Endothelial cell of umbilical vein (primary cell): ENCODE measurements at regions of chr1 and their contacts with region 1.

Region 1: GRCh38 chr1:20361806-20362640 is 71.3 kb downstream of the VWA5B1 start:
- DNase-seq: peak; percentile 45
- H3K4me3 ChIP-seq: no peak overlapping the region
- H3K27ac ChIP-seq: no peak overlapping the region
- H3K4me1 ChIP-seq: no peaks in the 10 kb centered on the region
- H3K27me3 ChIP-seq: peaks cover 20 to 21% of the 10 kb centered on the region in 2 experiments
- CTCF ChIP-seq: peak; percentile 76 to 81
- POLR2A ChIP-seq: no peak

Region 2: GRCh38 chr1:20212685-20213331 is 149.2 kb before region 1 on chr1:
- CTCF ChIA-PET with region 1: interaction called, 12 read pairs
- POLR2A ChIA-PET with region 1: no interaction called
- dilution Hi-C with region 1: no loop called
- intact Hi-C with region 1: loop called (anchors 5 kb)
- DNase-seq: peak; percentile 39
- H3K4me3 ChIP-seq: no peak overlapping the region
- H3K27ac ChIP-seq: no peak overlapping the region
- H3K4me1 ChIP-seq: no peaks in the 10 kb centered on the region
- H3K27me3 ChIP-seq: peaks cover 7% of the 10 kb centered on the region in 2 experiments
- CTCF ChIP-seq: peak; percentile 76 to 79
- POLR2A ChIP-seq: no peak

Region 3: GRCh38 chr1:20376880-20377494 is 15.0 kb after region 1 on chr1:
- CTCF ChIA-PET with region 1: interaction called, 11 read pairs
- POLR2A ChIA-PET with region 1: no interaction called
- dilution Hi-C with region 1: no loop called
- intact Hi-C with region 1: no loop called
- DNase-seq: peak; percentile 58
- H3K4me3 ChIP-seq: no peak overlapping the region
- H3K27ac ChIP-seq: no peak overlapping the region
- H3K4me1 ChIP-seq: no peaks in the 10 kb centered on the region
- H3K27me3 ChIP-seq: no peaks in the 10 kb centered on the region
- CTCF ChIP-seq: peak; percentile 73 to 91
- POLR2A ChIP-seq: no peak

Region 4: DNA sequence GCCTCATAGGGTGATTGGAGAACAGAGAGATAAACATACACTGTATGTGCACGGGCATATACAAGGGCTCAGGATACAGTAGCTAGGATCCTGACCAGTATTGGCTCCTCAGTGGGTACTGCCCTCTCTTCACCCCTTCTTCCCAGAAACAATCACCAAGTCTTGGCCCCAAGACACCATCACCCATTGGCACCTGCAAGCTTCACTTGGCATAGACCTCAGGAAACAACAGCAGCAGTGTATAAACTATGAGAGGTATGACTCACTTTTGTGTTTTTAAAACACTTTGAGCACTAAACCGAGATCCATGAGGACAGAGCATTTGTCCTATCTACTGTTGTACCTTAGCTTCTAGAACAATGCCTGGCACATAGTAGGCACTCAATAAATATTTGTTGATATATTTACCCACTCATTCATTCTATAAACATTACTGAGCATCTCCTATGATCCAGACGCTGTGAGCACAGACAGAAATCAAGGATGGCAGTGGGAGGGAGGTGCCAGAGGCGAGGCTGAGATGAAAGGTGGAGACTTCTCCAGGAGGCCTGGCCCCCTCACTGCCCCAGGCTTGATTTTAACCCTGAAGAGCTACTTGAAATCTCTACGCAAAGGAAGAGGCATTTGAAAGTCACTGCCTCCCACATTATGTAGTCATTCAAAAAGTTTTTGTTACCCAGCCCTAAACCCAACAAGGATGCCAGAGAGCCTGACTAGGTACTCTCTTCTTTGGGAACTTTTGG is 28.7 kb after region 1 on chr1:
- CTCF ChIA-PET with region 1: no interaction called
- POLR2A ChIA-PET with region 1: no interaction called
- dilution Hi-C with region 1: no loop called
- intact Hi-C with region 1: no loop called
- DNase-seq: peak; percentile 58
- H3K4me3 ChIP-seq: no peak overlapping the region
- H3K27ac ChIP-seq: no peak overlapping the region
- H3K4me1 ChIP-seq: no peaks in the 10 kb centered on the region
- H3K27me3 ChIP-seq: peaks cover 0 to 3% of the 10 kb centered on the region in 2 experiments
- CTCF ChIP-seq: no peak
- POLR2A ChIP-seq: no peak

Region 5: GRCh38 chr1:20430355-20431175 is 68.5 kb after region 1 on chr1:
- CTCF ChIA-PET with region 1: interaction called, 10 read pairs
- POLR2A ChIA-PET with region 1: no interaction called
- dilution Hi-C with region 1: no loop called
- intact Hi-C with region 1: loop called (anchors 1 kb)
- DNase-seq: peak; percentile 34
- H3K4me3 ChIP-seq: no peak overlapping the region
- H3K27ac ChIP-seq: no peak overlapping the region
- H3K4me1 ChIP-seq: peaks cover 8% of the 10 kb centered on the region
- H3K27me3 ChIP-seq: no peaks in the 10 kb centered on the region
- CTCF ChIP-seq: peak; percentile 64 to 79
- POLR2A ChIP-seq: no peak

Region 6: GRCh38 chr1:20485527-20486456 is 123.8 kb after region 1 on chr1 and contains the start of gene CAMK2N1:
- CTCF ChIA-PET with region 1: interaction called, 81 read pairs
- POLR2A ChIA-PET with region 1: no interaction called
- dilution Hi-C with region 1: no loop called
- intact Hi-C with region 1: no loop called
- DNase-seq: peak; percentile 44
- H3K4me3 ChIP-seq: peak within 1 kb of the TSS; percentile 54 to 78 (median 56)
- H3K27ac ChIP-seq: peak within 1 kb of the TSS; percentile 13
- H3K4me1 ChIP-seq: peaks cover 12% of the 10 kb centered on the region
- H3K27me3 ChIP-seq: peaks cover 0 to 3% of the 10 kb centered on the region in 2 experiments
- CTCF ChIP-seq: no peak
- POLR2A ChIP-seq: peak; percentile 54
- total RNA-seq, gene CAMK2N1: 11.9 and 18.3 TPM in 2 replicates

Region 7: DNA sequence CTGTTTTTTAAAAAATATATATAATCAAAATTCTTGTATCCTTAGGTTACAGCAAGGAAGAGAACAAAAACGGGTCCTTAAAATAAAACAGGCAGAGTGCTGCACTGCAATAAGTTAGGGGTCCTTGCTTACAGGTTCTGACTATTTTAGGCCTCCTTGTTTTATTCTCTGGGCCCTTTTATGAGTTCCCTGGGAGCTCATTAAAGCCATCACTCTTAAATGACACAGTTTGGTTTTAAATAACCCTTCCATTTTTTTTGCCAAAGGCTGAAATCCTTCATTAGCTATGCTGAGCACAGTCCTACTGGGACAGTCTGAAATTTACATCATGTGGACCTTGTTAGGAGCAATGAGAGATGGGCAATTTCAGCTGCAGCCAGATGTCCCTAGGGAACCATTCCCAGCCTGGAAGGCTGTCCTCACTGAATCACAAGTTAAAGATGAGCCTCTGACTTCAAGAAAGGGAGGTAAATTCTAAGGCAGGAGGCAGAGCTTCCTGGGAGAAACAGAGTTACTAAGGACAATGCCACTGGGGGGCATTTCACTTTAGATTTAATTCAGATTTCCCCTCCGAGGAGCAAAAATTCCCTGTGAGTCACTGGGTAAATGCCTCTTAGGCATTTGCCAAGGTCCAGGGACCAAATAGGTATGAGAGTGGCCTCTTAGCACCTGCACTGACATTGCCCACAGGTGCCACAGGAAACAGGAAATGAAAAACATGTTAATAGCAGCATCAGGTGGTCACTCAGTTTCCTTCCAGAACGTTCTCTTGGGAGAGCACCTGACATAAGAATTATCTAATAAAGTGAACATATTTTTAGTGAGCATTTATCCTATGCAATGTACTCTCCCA is 149.7 kb after region 1 on chr1:
- CTCF ChIA-PET with region 1: no interaction called
- POLR2A ChIA-PET with region 1: no interaction called
- dilution Hi-C with region 1: no loop called
- intact Hi-C with region 1: no loop called
- DNase-seq: no peak
- H3K4me3 ChIP-seq: no peak overlapping the region
- H3K27ac ChIP-seq: no peak overlapping the region
- H3K4me1 ChIP-seq: peaks cover 11% of the 10 kb centered on the region
- H3K27me3 ChIP-seq: peaks cover 2 to 3% of the 10 kb centered on the region in 2 experiments
- CTCF ChIP-seq: no peak
- POLR2A ChIP-seq: no peak